Common myeloid progenitor, CD34-positive (primary cell): ENCODE measurements at regions of chr3 and their contacts with region 1.

Region 1: GRCh38 chr3:14144423-14145075 is 19.7 kb downstream of the TMEM43 start:
- DNase-seq: peak; percentile 98 to 99 (median 98)
- H3K4me3 ChIP-seq: peak overlapping the region in 6 of 7 experiments; percentile 41 to 74 (median 57)
- H3K27ac ChIP-seq: peak overlapping the region; percentile 100
- H3K4me1 ChIP-seq: peaks cover 21 to 62% (median 42%) of the 10 kb centered on the region in 4 experiments
- H3K27me3 ChIP-seq: no peaks in the 10 kb centered on the region

Region 2: DNA sequence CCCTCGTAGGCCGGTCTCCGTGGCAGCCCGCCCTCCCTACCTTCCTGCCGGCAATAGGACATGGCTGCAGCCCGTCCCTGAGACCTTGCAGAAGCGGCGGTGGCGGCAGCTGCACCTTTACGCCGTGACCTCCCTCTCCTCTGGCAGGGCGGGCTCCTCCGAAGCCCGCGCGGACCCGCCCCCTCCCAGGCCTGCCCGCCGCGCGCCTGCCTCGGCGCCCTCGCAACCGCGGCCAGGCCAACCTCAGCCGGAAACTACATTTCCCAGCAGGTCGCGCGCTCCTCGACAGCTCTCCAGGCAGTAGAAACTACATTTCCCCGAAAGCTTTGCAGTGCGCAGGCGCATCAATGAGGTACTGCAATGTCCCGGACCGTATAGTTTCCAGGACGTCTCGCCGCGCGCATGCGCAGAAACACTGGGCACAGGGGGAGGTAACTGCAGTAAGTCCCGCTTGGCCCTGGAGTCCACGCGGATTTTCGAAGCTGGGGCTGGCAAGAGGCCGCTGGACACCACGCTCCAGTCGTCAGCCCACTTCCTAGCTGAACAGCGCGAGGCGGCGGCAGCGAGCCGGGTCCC is 19.8 kb before region 1 on chr3 and contains the starts of genes CHCHD4 and TMEM43:
- CTCF ChIA-PET with region 1: interaction called, 30 read pairs
- POLR2A ChIA-PET with region 1: interaction called, 28 read pairs
- DNase-seq: peak; percentile 98 to 99 (median 99)
- H3K4me3 ChIP-seq: peak within 1 kb of the TSS; percentile 80 to 99 (median 92)
- H3K27ac ChIP-seq: peak within 1 kb of the TSS; percentile 76 to 91
- H3K4me1 ChIP-seq: peaks cover 2 to 49% (median 35%) of the 10 kb centered on the region in 4 experiments
- H3K27me3 ChIP-seq: no peaks in the 10 kb centered on the region

Region 3: DNA sequence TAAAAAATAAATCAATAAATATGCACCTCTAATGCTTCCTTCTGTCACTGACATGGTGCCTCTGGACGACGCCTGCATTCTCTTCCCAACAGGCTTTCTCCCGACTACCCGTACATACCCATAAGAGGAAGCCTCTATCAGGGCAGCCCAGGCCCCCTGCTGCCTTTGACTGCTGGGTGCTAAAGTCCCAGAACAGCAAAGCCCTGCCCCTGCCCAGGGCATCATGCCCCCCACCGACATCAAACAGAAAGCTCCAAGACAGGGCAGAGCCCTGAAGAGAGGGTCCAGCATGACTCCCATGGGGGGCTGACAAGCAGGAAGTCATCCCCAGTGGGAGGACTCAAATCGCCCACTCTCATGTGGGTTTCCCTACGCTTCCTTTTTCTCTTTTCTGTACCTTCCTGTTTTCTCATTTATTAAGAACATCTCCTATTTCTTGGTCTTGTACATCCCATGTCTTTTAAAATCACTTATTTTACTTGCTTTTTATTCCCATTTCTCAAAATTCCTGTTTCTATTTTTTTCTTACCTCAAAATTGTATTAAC is 10.4 kb after region 1 on chr3:
- CTCF ChIA-PET with region 1: interaction called, 14 read pairs
- POLR2A ChIA-PET with region 1: no interaction called
- DNase-seq: peak in 2 of 3 donors; percentile 35 to 45
- H3K4me3 ChIP-seq: no peak overlapping the region
- H3K27ac ChIP-seq: no peak overlapping the region
- H3K4me1 ChIP-seq: peaks cover 0 to 2% (median 0%) of the 10 kb centered on the region in 4 experiments
- H3K27me3 ChIP-seq: no peaks in the 10 kb centered on the region

Region 4: DNA sequence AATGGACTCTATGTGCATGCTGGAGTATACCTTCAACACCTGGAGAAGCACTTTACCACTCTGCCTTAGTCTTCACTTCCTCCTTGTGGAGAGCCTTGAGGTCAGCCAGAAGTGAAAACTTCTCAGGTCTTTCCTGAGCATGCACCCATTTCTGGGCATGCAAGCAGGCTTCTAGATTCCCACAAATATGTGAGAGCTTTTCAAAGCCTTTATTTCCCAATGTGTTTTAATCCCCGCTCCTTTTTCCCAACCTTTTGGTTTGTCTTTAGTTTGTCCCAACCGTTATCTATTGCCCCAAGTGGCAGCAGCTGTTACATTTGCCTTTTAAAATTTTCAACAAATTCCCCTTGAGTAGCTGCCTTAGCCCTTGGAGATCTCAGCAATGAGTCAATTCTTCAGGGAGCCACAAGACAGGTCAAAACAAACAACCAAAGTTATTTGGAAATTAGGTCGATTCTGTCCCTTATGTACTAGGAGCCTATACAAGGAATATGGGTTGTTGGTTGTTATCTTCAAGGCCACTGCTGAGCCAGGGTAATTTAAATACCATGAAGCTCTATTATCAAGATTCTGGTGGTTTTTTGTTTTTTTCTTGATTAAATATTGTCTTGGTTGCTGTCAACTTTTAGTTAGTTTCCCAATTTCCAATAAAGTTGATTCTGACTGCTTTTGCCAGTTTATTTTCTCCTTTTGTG is 78.5 kb after region 1 on chr3:
- CTCF ChIA-PET with region 1: no interaction called
- POLR2A ChIA-PET with region 1: no interaction called
- DNase-seq: no peak
- H3K4me3 ChIP-seq: no peak overlapping the region
- H3K27ac ChIP-seq: no peak overlapping the region
- H3K4me1 ChIP-seq: peaks cover 0 to 8% (median 3%) of the 10 kb centered on the region in 4 experiments
- H3K27me3 ChIP-seq: no peaks in the 10 kb centered on the region